PC-3 (cell line): ENCODE measurements at regions of chr6 and their contacts with region 1.

Region 1: DNA sequence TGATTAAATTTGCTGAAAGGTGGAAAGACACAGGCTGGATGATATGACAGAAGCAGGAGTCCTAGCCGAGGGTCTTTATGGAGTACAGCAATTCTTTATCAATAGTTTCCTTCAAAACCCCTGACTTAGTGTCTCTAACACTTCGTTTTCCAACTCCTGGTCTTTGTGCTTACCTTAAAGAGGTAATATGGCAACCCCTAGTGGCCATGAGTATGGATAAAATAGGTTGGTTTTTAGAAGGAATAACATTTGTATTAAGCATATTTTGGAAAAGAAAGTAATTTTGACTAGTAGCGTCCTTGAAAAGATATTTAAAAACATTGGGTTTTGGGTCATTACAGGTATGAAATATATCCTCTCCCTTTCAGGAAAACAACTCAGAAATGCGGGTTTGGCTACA is 51.9 kb downstream of the VGLL2 start:
- DNase-seq: peak; percentile 59
- ATAC-seq: peak; percentile 63
- H3K4me3 ChIP-seq: no peak overlapping the region
- H3K27ac ChIP-seq: no peak overlapping the region
- H3K4me1 ChIP-seq: no peaks in the 10 kb centered on the region
- H3K27me3 ChIP-seq: no peaks in the 10 kb centered on the region
- CTCF ChIP-seq: peak; percentile 79

Region 2: DNA sequence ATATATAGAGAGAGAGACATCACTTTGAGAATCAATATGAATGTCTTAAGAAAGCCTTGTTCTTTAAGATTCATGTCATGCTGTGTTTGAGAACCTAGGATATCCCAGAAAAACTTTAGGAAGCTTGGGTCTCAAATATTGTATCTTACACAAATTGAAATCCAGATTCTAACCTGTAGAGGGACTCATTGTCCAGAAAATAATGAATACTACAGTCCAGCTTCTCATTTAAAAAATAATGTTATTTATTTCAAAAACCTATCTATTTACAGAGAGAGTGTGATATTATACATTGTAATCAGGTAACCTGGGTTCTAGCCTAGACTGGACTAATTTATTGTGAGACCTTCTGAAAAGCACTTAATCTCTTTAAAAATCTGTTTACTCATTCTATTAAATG is 436.0 kb before region 1 on chr6:
- CTCF ChIA-PET with region 1: no interaction called
- POLR2A ChIA-PET with region 1: no interaction called
- intact Hi-C with region 1: loop called (anchors 5 kb)
- DNase-seq: peak; percentile 53
- ATAC-seq: peak; percentile 37; the same call in 1 of the 2 replicates
- H3K4me3 ChIP-seq: no peak overlapping the region
- H3K27ac ChIP-seq: no peak overlapping the region
- H3K4me1 ChIP-seq: peaks cover 20% of the 10 kb centered on the region
- H3K27me3 ChIP-seq: peaks cover 13% of the 10 kb centered on the region
- CTCF ChIP-seq: peak; percentile 65

Region 3: GRCh38 chr6:117118490-117118889 is 198.8 kb before region 1 on chr6:
- CTCF ChIA-PET with region 1: no interaction called
- POLR2A ChIA-PET with region 1: no interaction called
- intact Hi-C with region 1: no loop called
- DNase-seq: no peak
- ATAC-seq: no peak
- H3K4me3 ChIP-seq: no peak overlapping the region
- H3K27ac ChIP-seq: no peak overlapping the region
- H3K4me1 ChIP-seq: no peaks in the 10 kb centered on the region
- H3K27me3 ChIP-seq: no peaks in the 10 kb centered on the region
- CTCF ChIP-seq: no peak

Region 4: GRCh38 chr6:117167520-117168271 is 149.6 kb before region 1 on chr6:
- CTCF ChIA-PET with region 1: no interaction called
- POLR2A ChIA-PET with region 1: no interaction called
- intact Hi-C with region 1: loop called (anchors 10 kb)
- DNase-seq: peak; percentile 89
- ATAC-seq: peak; percentile 79
- H3K4me3 ChIP-seq: no peak overlapping the region; the same call in 1 of the 2 replicates
- H3K27ac ChIP-seq: peak overlapping the region; percentile 70
- H3K4me1 ChIP-seq: peaks cover 45% of the 10 kb centered on the region
- H3K27me3 ChIP-seq: no peaks in the 10 kb centered on the region
- CTCF ChIP-seq: peak; percentile 47; the same call in 1 of the 2 replicates

Region 5: DNA sequence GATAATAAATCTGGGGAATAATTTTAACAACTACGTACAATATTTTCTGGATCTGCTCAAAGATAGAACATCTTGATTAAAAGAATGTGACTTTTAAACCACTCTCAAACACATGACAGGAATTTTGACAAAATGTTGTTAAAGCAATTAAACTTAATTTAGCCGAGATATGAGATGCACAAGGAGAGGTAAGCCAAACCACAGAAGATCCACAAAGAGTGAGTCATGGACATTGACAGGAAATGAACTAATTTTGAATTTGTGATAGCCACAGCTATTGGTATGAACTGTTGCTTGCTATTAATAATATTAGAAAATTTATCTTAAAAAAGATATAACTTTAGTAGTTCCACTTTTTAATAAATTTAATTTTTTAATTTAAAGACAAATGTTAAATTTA is 79.7 kb before region 1 on chr6:
- CTCF ChIA-PET with region 1: no interaction called
- POLR2A ChIA-PET with region 1: no interaction called
- intact Hi-C with region 1: loop called (anchors 2 kb)
- DNase-seq: peak; percentile 48
- ATAC-seq: peak; percentile 51
- H3K4me3 ChIP-seq: no peak overlapping the region
- H3K27ac ChIP-seq: no peak overlapping the region
- H3K4me1 ChIP-seq: peaks cover 4% of the 10 kb centered on the region; the same call in 1 of the 2 replicates
- H3K27me3 ChIP-seq: no peaks in the 10 kb centered on the region
- CTCF ChIP-seq: no peak

Region 6: GRCh38 chr6:117280922-117281321 is 36.3 kb before region 1 on chr6:
- CTCF ChIA-PET with region 1: no interaction called
- POLR2A ChIA-PET with region 1: no interaction called
- intact Hi-C with region 1: loop called (anchors 2 kb)
- DNase-seq: peak; percentile 55
- ATAC-seq: peak; percentile 55; the same call in 1 of the 2 replicates
- H3K4me3 ChIP-seq: no peak overlapping the region
- H3K27ac ChIP-seq: no peak overlapping the region
- H3K4me1 ChIP-seq: no peaks in the 10 kb centered on the region
- H3K27me3 ChIP-seq: peaks cover 17% of the 10 kb centered on the region
- CTCF ChIP-seq: peak; percentile 62